Sigmoid colon (tissue), 7 donors: ENCODE measurements at regions of chr5 and their contacts with region 1.

Region 1: DNA sequence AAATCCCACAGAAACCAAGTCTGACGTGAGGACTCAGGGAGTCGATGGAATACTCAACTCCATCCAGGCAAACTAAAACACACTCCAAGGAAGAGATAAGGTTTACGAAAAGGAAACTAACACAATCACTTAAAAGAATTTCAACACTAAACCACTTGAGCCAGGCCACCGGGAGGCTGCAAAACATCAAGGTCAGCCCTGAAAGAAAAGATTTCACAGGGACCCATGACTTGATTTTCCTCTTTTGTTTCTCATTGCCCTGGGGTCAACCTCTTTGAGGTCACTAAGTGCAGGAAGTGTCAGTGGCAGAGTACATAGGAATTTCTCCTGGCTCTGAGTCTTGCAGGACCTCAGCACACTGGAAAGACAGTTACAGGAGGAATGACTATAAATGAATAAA is 77.8 kb upstream of the TARS1 start:
- DNase-seq: peak; percentile 77
- H3K4me3 ChIP-seq: no peak overlapping the region
- H3K27ac ChIP-seq: peak overlapping the region; percentile 40 to 72 (median 66)
- H3K4me1 ChIP-seq: peaks cover 0 to 34% (median 19%) of the 10 kb centered on the region in 4 donors
- H3K27me3 ChIP-seq: no peaks in the 10 kb centered on the region
- CTCF ChIP-seq: no peak
- EP300 ChIP-seq: no peak
- POLR2A ChIP-seq: no peak

Region 2: GRCh38 chr5:32355686-32356085 is 1007.2 kb before region 1 on chr5:
- intact Hi-C with region 1: no loop called
- DNase-seq: no peak
- H3K4me3 ChIP-seq: no peak overlapping the region
- H3K27ac ChIP-seq: no peak overlapping the region
- H3K4me1 ChIP-seq: no peaks in the 10 kb centered on the region
- H3K27me3 ChIP-seq: no peaks in the 10 kb centered on the region
- CTCF ChIP-seq: no peak
- EP300 ChIP-seq: no peak
- POLR2A ChIP-seq: no peak

Region 3: GRCh38 chr5:33161421-33161820 is 201.5 kb before region 1 on chr5:
- intact Hi-C with region 1: no loop called
- DNase-seq: no peak
- H3K4me3 ChIP-seq: no peak overlapping the region
- H3K27ac ChIP-seq: no peak overlapping the region
- H3K4me1 ChIP-seq: no peaks in the 10 kb centered on the region
- H3K27me3 ChIP-seq: no peaks in the 10 kb centered on the region
- CTCF ChIP-seq: no peak
- EP300 ChIP-seq: no peak
- POLR2A ChIP-seq: no peak

Region 4: GRCh38 chr5:33321026-33321425 is 41.9 kb before region 1 on chr5:
- intact Hi-C with region 1: loop called (anchors 5 kb)
- DNase-seq: peak; percentile 87
- H3K4me3 ChIP-seq: no peak overlapping the region
- H3K27ac ChIP-seq: peak overlapping the region; percentile 55 to 77 (median 72)
- H3K4me1 ChIP-seq: peaks cover 0 to 50% (median 37%) of the 10 kb centered on the region in 4 donors
- H3K27me3 ChIP-seq: no peaks in the 10 kb centered on the region
- CTCF ChIP-seq: no peak
- EP300 ChIP-seq: peak in 2 of 4 donors; percentile 19 to 56
- POLR2A ChIP-seq: no peak

Region 5: GRCh38 chr5:33401482-33402390 is 38.8 kb after region 1 on chr5:
- intact Hi-C with region 1: no loop called
- DNase-seq: no peak
- H3K4me3 ChIP-seq: no peak overlapping the region
- H3K27ac ChIP-seq: peak overlapping the region in 1 of 4 donors; percentile 19
- H3K4me1 ChIP-seq: peaks cover 0 to 19% (median 13%) of the 10 kb centered on the region in 4 donors
- H3K27me3 ChIP-seq: no peaks in the 10 kb centered on the region
- CTCF ChIP-seq: no peak
- EP300 ChIP-seq: no peak
- POLR2A ChIP-seq: no peak

Region 6: DNA sequence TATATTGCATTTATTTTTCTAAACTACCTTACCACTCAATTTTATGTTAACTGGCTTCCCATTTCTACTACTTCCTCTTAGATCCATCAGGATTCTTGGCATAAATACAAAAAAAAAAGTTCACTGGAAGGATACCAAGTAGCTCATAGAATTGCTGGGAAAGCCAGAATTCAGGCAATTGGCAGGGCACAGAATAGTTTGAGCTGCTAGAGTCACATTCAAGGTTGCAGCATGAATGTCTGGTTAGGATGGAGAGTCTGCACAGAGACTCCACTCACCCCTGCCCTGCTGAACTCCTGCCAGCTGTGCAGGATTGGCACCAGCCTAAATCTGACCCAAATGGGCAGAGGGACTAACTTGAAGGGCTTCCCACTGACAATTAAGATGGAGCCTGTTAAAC is 649.9 kb after region 1 on chr5:
- intact Hi-C with region 1: no loop called
- DNase-seq: no peak
- H3K4me3 ChIP-seq: no peak overlapping the region
- H3K27ac ChIP-seq: no peak overlapping the region
- H3K4me1 ChIP-seq: peaks cover 0 to 20% (median 15%) of the 10 kb centered on the region in 4 donors
- H3K27me3 ChIP-seq: no peaks in the 10 kb centered on the region
- CTCF ChIP-seq: no peak
- EP300 ChIP-seq: no peak
- POLR2A ChIP-seq: no peak